Natural killer cell (primary cell): ENCODE measurements at regions of chr11 and their contacts with region 1.

Region 1: GRCh38 chr11:123054301-123055065 is 7.5 kb downstream of the HSPA8 start:
- DNase-seq: peak in 1 of 2 donors; percentile 85
- ATAC-seq: peak; percentile 85 to 95 (median 90)
- H3K4me3 ChIP-seq: no peak overlapping the region
- H3K4me3 Mint-ChIP-seq: no peak overlapping the region
- H3K27ac ChIP-seq: no peak overlapping the region
- H3K27ac Mint-ChIP-seq: peak overlapping the region; percentile 72 to 99
- H3K4me1 ChIP-seq: peaks cover 42% of the 10 kb centered on the region
- H3K4me1 Mint-ChIP-seq: peaks cover 41 to 56% of the 10 kb centered on the region in 2 donors
- H3K27me3 ChIP-seq: no peaks in the 10 kb centered on the region
- H3K27me3 Mint-ChIP-seq: no peaks in the 10 kb centered on the region
- CTCF ChIP-seq: peak; percentile 76

Region 2: DNA sequence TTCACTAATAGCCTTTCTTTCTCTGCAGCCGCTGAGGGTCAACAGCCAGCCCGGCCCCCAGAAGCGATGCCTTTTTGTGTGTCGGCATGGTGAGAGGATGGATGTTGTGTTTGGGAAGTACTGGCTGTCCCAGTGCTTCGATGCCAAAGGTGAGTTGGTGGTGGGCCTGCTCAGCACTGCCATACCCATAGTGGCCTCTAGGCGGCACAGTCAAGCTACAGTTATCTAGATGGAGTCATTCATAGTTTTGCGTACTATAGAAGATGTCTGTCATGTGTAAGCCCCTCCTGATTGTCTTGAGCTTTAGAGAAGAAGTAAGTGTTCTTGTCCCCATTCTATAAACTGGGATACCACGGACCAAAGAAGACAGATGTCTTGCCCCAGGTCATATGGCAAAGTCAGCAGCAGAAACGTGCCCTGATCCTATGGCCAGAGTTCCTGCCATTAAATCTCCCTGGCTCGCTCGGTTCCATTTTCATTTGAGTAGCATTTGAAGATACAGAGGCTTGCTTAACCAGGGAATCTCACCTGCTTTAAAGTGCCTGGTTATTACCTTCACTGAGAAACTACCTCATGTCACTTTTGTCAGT is 258.3 kb before region 1 on chr11:
- intact Hi-C with region 1: loop called (anchors 1 kb)
- DNase-seq: peak; percentile 61 to 82
- ATAC-seq: peak; percentile 87 to 99 (median 95)
- H3K4me3 ChIP-seq: no peak overlapping the region
- H3K4me3 Mint-ChIP-seq: no peak overlapping the region
- H3K27ac ChIP-seq: no peak overlapping the region
- H3K27ac Mint-ChIP-seq: no peak overlapping the region
- H3K4me1 ChIP-seq: peaks cover 5% of the 10 kb centered on the region
- H3K4me1 Mint-ChIP-seq: peaks cover 0 to 5% of the 10 kb centered on the region in 2 donors
- H3K27me3 ChIP-seq: no peaks in the 10 kb centered on the region
- H3K27me3 Mint-ChIP-seq: no peaks in the 10 kb centered on the region
- CTCF ChIP-seq: peak; percentile 93

Region 3: DNA sequence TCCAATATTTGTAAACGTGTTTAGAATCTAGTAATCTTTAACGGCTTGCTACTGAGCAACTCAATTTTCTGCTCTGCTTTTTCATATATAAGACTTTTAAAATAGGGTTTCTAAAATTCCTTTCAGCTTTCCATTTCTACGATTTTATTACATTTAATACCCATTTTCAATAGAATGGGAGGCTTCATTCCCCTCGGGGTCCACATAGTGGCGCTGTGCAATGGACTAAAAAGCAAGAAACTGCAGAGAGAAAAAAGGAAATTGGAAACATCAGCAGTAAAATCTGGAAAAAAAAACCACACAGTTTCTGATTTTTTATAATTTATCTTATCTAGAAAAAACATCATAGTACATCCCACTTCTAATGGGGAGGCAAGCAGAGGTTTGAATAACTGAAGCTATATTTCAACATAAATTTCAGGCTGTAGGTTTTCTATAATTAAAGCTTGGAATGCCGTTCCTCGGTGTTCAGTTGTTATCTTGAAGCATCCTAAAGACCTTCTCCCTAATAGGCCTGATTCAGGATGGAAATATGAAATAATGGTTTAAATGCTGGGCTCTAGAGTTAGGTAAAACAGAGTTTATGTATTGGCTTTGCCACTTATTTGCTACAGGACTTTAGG is 190.7 kb before region 1 on chr11:
- intact Hi-C with region 1: loop called (anchors 5 kb)
- DNase-seq: peak in 1 of 2 donors; percentile 65
- ATAC-seq: no peak
- H3K4me3 ChIP-seq: no peak overlapping the region
- H3K4me3 Mint-ChIP-seq: no peak overlapping the region
- H3K27ac ChIP-seq: no peak overlapping the region
- H3K27ac Mint-ChIP-seq: no peak overlapping the region
- H3K4me1 ChIP-seq: no peaks in the 10 kb centered on the region
- H3K4me1 Mint-ChIP-seq: peaks cover 0 to 5% of the 10 kb centered on the region in 2 donors
- H3K27me3 ChIP-seq: no peaks in the 10 kb centered on the region
- H3K27me3 Mint-ChIP-seq: no peaks in the 10 kb centered on the region
- CTCF ChIP-seq: peak; percentile 80